ENCODE measurements at regions of chr4 and their contacts with region 1.

Region 1: GRCh38 chr4:42656944-42657792 is at the start of gene ATP8A1:
- DNase-seq: peak; percentile 92
- H3K4me3 Mint-ChIP-seq: peak within 1 kb of the TSS; percentile 77
- H3K27ac Mint-ChIP-seq: peak within 1 kb of the TSS; percentile 86
- H3K4me1 Mint-ChIP-seq: peaks cover 29% of the 10 kb centered on the region
- H3K27me3 Mint-ChIP-seq: no peaks in the 10 kb centered on the region
- CTCF ChIP-seq: no peak
- total RNA-seq, gene ATP8A1: 0.19 and 0.34 TPM in 2 replicates

Region 2: GRCh38 chr4:42673082-42673425 is 15.9 kb after region 1 on chr4:
- CTCF ChIA-PET with region 1: interaction called, 3 read pairs
- POLR2A ChIA-PET with region 1: interaction called, 16 read pairs
- intact Hi-C with region 1: no loop called
- DNase-seq: peak; percentile 78
- H3K4me3 Mint-ChIP-seq: no peak overlapping the region
- H3K27ac Mint-ChIP-seq: peak overlapping the region; percentile 54
- H3K4me1 Mint-ChIP-seq: peaks cover 8% of the 10 kb centered on the region
- H3K27me3 Mint-ChIP-seq: peaks cover 11% of the 10 kb centered on the region
- CTCF ChIP-seq: no peak

Measured in MCF 10A (cell line).